Left ventricle myocardium superior (tissue), 1 donor: ENCODE measurements at regions of chr10 and their contacts with region 1.

Region 1: DNA sequence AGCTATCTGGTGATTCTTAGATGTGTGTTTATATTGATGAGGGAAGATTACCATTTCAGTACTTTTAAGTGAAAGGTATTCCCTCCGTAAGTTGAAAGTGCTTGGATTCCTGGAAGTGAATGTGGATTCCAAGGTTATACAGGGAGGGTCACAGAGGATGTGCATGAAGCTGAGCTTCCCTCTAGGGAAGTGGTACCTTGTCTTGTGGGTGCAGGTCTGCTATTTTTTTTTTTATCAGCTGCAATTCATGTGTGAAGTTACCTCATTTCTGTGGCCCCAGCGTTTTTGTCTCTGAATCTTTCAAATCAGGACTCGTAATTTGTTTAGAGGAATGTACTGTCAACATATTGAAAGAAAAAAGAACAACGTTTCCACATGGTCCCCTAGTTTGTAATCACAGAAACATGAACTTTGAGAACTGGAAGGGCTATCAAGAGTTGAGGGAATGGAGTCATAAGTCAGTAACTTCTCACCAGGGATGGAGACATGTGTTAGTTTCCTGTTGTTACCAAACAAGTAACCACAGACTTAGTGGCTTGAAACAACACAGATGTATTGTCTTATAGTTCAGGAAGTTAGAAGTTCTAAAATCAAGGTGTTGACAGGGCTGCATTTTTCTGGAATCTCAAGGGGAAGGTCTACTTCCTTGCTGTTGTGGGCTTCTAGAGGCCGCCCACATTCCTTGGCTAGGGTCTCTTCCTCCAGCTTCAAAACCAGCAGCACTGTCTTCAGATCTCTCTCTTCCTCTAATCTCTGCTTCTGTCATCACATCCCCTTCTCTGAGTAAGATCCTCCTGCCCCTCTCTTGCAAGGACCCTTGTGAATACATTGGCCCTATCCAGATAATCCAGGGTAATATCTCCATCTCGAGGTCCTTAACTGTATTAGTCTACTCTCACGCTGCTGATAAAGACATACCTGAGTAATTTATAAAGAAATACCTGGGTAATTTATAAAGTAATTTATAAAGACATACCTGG is 64.4 kb downstream of the RAB18 start:
- DNase-seq: no peak
- ATAC-seq: peak; percentile 66

Region 2: DNA sequence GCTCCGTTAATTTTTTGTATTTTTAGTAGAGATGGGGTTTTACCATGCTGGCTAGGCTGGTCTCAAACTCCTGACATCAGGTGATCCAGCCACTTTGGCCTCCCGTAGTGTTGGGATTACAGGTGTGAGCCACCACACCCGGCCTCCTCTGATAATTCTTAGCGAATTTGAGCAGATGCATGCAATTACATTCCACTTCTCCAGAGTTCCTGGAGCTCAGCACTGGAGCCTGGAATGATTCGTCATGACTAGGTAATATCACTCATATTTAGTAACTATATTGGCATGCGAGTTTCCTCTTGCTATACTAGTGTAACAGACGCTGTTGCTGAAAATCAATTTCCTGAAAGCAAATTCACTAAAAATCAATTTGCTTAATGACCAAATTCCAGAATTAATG is 90.3 kb after region 1 on chr10:
- intact Hi-C with region 1: loop called (anchors 5 kb)
- DNase-seq: no peak
- ATAC-seq: no peak

Region 3: GRCh38 chr10:28236591-28236990 is 668.1 kb after region 1 on chr10:
- intact Hi-C with region 1: loop called (anchors 5 kb)
- DNase-seq: no peak
- ATAC-seq: no peak